H1 (cell line): ENCODE measurements at regions of chr1 and their contacts with region 1.

Region 1: DNA sequence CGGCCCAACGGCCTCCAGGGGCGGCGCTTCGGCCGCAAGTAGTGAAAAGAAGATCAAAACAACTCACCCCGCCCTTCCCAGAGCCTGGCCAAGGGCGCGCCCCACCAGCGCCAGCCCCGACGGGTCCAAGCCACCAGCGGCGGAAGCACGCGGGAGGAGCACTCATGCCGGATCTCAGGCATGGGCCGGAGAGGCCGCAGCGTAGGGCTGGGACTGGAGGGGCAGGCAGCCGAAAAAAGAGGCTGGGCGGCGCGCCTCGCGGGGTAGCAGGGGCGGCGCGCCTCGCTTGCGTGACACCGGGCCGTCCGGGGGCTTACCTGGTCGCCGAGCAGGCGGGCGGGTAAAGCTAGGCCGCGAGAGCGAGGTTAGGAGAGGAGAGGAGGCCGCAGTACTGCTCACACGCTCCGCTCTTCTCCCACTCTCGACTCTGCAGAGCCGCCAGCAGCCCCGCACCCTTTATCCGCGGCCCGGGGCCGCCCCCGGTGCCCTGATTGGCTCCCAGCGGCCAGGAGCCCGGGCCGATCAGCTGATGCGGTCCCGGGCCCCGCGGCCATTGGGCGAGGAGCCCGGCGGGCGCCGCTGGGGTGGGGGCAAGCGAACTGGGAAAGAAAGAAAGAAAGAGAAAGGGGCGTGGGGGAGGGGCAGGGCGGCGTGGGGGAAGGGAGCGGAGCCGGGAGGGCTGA is at the start of gene GLUL:
- DNase-seq: peak; percentile 89 to 94
- H3K4me3 ChIP-seq: peak within 1 kb of the TSS; percentile 68 to 99 (median 96)
- H3K27ac ChIP-seq: peak within 1 kb of the TSS; percentile 97
- H3K4me1 ChIP-seq: peaks cover 4 to 12% (median 8%) of the 10 kb centered on the region in 4 experiments; a peak in 5 of 7 replicates
- H3K27me3 ChIP-seq: no peaks in the 10 kb centered on the region; a peak in 1 of 7 replicates
- CTCF ChIP-seq: no peak
- EP300 ChIP-seq: no peak
- POLR2A ChIP-seq: peak; percentile 99
- RAD21 ChIP-seq: no peak
- total RNA-seq, gene GLUL: 453 and 457 TPM in 2 replicates

Region 2: GRCh38 chr1:182101415-182102042 is 290.0 kb before region 1 on chr1:
- CTCF ChIA-PET with region 1: interaction called, 3 read pairs
- POLR2A ChIA-PET with region 1: interaction called, 17 read pairs
- DNase-seq: peak; percentile 76 to 92
- H3K4me3 ChIP-seq: peak overlapping the region in 1 of 4 experiments; percentile 41; a peak in 1 of 8 replicates
- H3K27ac ChIP-seq: peak overlapping the region; percentile 79; the same call in 1 of the 2 replicates
- H3K4me1 ChIP-seq: peaks cover 2 to 13% (median 11%) of the 10 kb centered on the region in 4 experiments; a peak in 6 of 7 replicates
- H3K27me3 ChIP-seq: no peaks in the 10 kb centered on the region
- CTCF ChIP-seq: no peak
- EP300 ChIP-seq: peak; percentile 33 to 98
- POLR2A ChIP-seq: peak; percentile 40 to 48; a peak in 2 of 3 replicates
- RAD21 ChIP-seq: peak in 1 of 2 experiments; percentile 22; a peak in 2 of 4 replicates

Region 3: DNA sequence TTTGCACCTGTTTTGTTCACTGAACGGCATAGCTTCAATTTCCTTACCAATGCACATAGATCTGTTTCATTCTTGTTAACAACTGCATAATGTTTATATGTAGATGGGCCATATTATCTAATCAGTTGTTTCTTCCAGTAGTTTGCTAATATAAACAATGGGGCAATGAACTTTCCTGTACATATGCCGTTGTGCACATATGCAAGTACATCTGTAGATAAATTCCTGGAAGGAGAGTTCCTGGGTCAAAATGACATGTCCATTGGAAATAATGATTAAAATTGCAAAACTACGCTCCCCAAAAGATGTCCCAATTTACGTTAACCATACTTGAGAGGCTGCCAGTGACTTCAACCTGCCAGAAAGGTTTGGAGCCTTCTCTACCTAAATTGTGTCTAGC is 27.9 kb before region 1 on chr1:
- CTCF ChIA-PET with region 1: interaction called, 27 read pairs
- POLR2A ChIA-PET with region 1: interaction called, 11 read pairs
- DNase-seq: no peak
- H3K4me3 ChIP-seq: no peak overlapping the region
- H3K27ac ChIP-seq: no peak overlapping the region
- H3K4me1 ChIP-seq: peaks cover 0 to 9% (median 6%) of the 10 kb centered on the region in 4 experiments; a peak in 4 of 7 replicates
- H3K27me3 ChIP-seq: no peaks in the 10 kb centered on the region
- CTCF ChIP-seq: no peak
- EP300 ChIP-seq: no peak
- POLR2A ChIP-seq: no peak
- RAD21 ChIP-seq: no peak

Region 4: GRCh38 chr1:182374101-182374834 is 17.2 kb before region 1 on chr1:
- CTCF ChIA-PET with region 1: interaction called, 14 read pairs
- POLR2A ChIA-PET with region 1: interaction called, 69 read pairs
- DNase-seq: no peak
- H3K4me3 ChIP-seq: no peak overlapping the region
- H3K27ac ChIP-seq: no peak overlapping the region
- H3K4me1 ChIP-seq: no peaks in the 10 kb centered on the region
- H3K27me3 ChIP-seq: no peaks in the 10 kb centered on the region
- CTCF ChIP-seq: no peak
- EP300 ChIP-seq: no peak
- POLR2A ChIP-seq: no peak
- RAD21 ChIP-seq: no peak

Region 5: GRCh38 chr1:182476625-182477024 is 85.1 kb after region 1 on chr1:
- CTCF ChIA-PET with region 1: no interaction called
- POLR2A ChIA-PET with region 1: no interaction called
- DNase-seq: no peak
- H3K4me3 ChIP-seq: no peak overlapping the region
- H3K27ac ChIP-seq: no peak overlapping the region
- H3K4me1 ChIP-seq: no peaks in the 10 kb centered on the region
- H3K27me3 ChIP-seq: no peaks in the 10 kb centered on the region
- CTCF ChIP-seq: no peak
- EP300 ChIP-seq: no peak
- POLR2A ChIP-seq: no peak
- RAD21 ChIP-seq: no peak

Region 6: GRCh38 chr1:182533896-182534295 is 142.4 kb after region 1 on chr1:
- CTCF ChIA-PET with region 1: no interaction called
- POLR2A ChIA-PET with region 1: no interaction called
- DNase-seq: no peak
- H3K4me3 ChIP-seq: no peak overlapping the region
- H3K27ac ChIP-seq: no peak overlapping the region
- H3K4me1 ChIP-seq: no peaks in the 10 kb centered on the region
- H3K27me3 ChIP-seq: no peaks in the 10 kb centered on the region; a peak in 1 of 7 replicates
- CTCF ChIP-seq: no peak
- EP300 ChIP-seq: no peak
- POLR2A ChIP-seq: no peak
- RAD21 ChIP-seq: no peak

Region 7: DNA sequence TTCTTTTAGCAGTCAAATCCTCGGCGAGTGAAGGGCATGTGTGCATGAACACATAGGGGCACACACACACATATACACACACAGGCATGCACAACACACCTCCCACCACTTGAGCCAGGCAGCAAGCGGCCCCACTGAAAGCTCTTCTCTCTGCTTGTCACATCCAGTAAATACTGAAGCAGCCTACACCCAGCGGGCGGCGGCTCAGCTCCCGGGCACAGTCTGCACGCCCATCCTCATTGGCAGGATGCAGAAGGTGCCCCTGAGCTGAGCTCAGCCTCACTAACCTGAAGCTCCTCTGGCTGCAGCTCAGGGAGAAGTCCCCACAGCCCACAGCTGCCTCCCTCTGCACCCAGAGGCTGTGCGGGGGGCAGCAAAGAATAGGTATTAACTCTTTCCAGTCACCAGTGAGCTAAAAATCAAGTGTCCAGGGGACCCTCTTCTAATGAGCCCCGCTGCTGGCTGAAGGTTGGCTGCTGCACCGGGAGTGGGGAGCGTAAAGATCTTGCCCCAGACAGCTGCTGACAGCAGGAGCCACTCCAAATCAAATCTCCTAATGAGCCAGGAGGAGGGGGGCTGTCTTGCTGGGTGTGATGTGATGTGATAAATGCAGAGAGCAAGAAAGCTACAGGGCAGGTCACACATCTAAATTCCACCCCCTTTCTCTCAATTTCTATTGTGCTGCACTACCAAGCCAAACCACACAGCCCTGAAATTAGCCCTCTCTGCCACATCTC is 280.4 kb after region 1 on chr1:
- CTCF ChIA-PET with region 1: no interaction called
- POLR2A ChIA-PET with region 1: no interaction called
- DNase-seq: no peak
- H3K4me3 ChIP-seq: no peak overlapping the region
- H3K27ac ChIP-seq: no peak overlapping the region
- H3K4me1 ChIP-seq: peaks cover 6 to 22% (median 10%) of the 10 kb centered on the region in 4 experiments
- H3K27me3 ChIP-seq: peaks cover 0 to 4% (median 0%) of the 10 kb centered on the region in 4 experiments; a peak in 2 of 7 replicates
- CTCF ChIP-seq: no peak
- EP300 ChIP-seq: no peak
- POLR2A ChIP-seq: no peak
- RAD21 ChIP-seq: no peak